ENCODE measurements at regions of chr18 and their contacts with region 1.

Region 1: GRCh38 chr18:11553098-11553940 is 56.1 kb upstream of the SLC35G4 start:
- DNase-seq: no peak
- ATAC-seq: peak in 5 of 8 donors; percentile 23 to 75 (median 58)
- H3K4me3 ChIP-seq: no peak overlapping the region
- H3K27ac ChIP-seq: no peak overlapping the region
- H3K4me1 ChIP-seq: no peaks in the 10 kb centered on the region
- H3K27me3 ChIP-seq: peaks cover 0 to 17% (median 0%) of the 10 kb centered on the region in 7 donors
- CTCF ChIP-seq: peak; percentile 71 to 95 (median 89)

Region 2: DNA sequence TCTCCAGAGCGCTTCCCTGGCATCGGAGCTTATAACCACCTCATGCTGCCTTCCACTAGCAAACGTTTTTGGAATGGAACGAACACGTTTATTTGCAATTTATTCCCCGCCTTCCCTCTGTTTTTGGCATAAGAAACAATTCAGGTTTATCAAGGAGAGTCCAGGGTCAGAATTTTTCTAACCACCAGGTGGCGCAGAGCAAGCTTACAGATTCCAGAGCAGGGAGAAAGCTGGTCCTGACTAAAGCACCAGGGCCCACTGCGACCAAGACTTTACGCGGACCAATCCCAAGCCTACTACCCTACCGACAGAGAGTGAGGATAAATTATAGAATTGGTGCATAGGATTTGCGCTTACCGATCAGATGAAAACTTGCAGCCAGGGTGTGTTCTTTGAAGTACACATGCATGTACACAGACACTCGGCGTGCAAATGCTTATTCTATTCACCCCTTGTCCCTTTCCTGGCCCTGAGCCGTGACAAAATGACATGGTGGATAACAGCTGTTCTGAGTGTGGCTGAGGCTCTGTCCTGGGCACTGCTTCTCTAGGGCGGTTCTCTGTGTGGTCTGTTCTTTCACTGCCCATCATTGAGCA is 992.8 kb before region 1 on chr18:
- intact Hi-C with region 1: loop called in 4 of 10 experiments (anchors 5 to 10 kb)
- DNase-seq: peak; percentile 39 to 76
- ATAC-seq: peak; percentile 68 to 85 (median 79)
- H3K4me3 ChIP-seq: peak overlapping the region in 7 of 10 donors; percentile 13 to 45 (median 37)
- H3K27ac ChIP-seq: peak overlapping the region in 3 of 10 donors; percentile 31 to 57 (median 46)
- H3K4me1 ChIP-seq: peaks cover 0 to 18% (median 12%) of the 10 kb centered on the region in 9 donors
- H3K27me3 ChIP-seq: no peaks in the 10 kb centered on the region
- CTCF ChIP-seq: peak; percentile 64 to 82 (median 77)

Region 3: DNA sequence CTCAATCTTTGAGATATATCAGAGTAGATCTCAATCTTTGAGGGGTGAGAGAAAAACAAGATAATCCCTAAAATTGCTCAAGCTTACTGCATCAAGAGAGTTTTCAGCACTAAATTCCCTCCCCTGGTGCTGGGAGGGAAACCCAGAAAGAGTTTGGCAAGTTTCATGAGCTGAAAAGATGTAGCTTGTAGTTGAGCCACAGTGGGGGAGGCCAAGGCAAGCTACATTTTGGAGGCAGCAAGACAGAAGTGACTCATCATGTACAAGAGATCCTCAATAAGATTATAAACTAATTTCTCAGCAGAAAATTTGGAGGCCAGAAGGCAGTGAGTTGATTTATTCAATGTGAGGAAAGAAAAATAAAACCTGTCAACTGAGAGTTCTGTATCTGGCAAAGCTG is 712.1 kb before region 1 on chr18:
- intact Hi-C with region 1: loop called in 2 of 10 experiments (anchors 5 to 10 kb)
- DNase-seq: no peak
- ATAC-seq: peak in 1 of 8 donors; percentile 46
- H3K4me3 ChIP-seq: no peak overlapping the region
- H3K27ac ChIP-seq: no peak overlapping the region
- H3K4me1 ChIP-seq: peaks cover 0 to 7% (median 0%) of the 10 kb centered on the region in 9 donors
- H3K27me3 ChIP-seq: peaks cover 0 to 3% (median 0%) of the 10 kb centered on the region in 7 donors
- CTCF ChIP-seq: no peak

Region 4: GRCh38 chr18:10846657-10847407 is 706.5 kb before region 1 on chr18:
- intact Hi-C with region 1: loop called in 8 of 10 experiments (anchors 5 to 10 kb)
- DNase-seq: no peak
- ATAC-seq: no peak
- H3K4me3 ChIP-seq: no peak overlapping the region
- H3K27ac ChIP-seq: no peak overlapping the region
- H3K4me1 ChIP-seq: peaks cover 0 to 7% (median 0%) of the 10 kb centered on the region in 9 donors
- H3K27me3 ChIP-seq: peaks cover 0 to 12% (median 0%) of the 10 kb centered on the region in 7 donors
- CTCF ChIP-seq: no peak

Region 5: GRCh38 chr18:10851824-10852319 is 701.4 kb before region 1 on chr18:
- intact Hi-C with region 1: loop called in 8 of 10 experiments (anchors 5 to 10 kb)
- DNase-seq: no peak
- ATAC-seq: no peak
- H3K4me3 ChIP-seq: no peak overlapping the region
- H3K27ac ChIP-seq: no peak overlapping the region
- H3K4me1 ChIP-seq: no peaks in the 10 kb centered on the region
- H3K27me3 ChIP-seq: peaks cover 0 to 19% (median 0%) of the 10 kb centered on the region in 7 donors
- CTCF ChIP-seq: peak; percentile 46 to 85 (median 74)

Region 6: GRCh38 chr18:11034884-11035283 is 518.4 kb before region 1 on chr18:
- intact Hi-C with region 1: loop called in 1 of 10 experiments (anchors 10 kb)
- DNase-seq: no peak
- ATAC-seq: no peak
- H3K4me3 ChIP-seq: no peak overlapping the region
- H3K27ac ChIP-seq: no peak overlapping the region
- H3K4me1 ChIP-seq: no peaks in the 10 kb centered on the region
- H3K27me3 ChIP-seq: peaks cover 0 to 20% (median 0%) of the 10 kb centered on the region in 7 donors
- CTCF ChIP-seq: no peak

Region 7: GRCh38 chr18:11310476-11311086 is 242.7 kb before region 1 on chr18:
- intact Hi-C with region 1: loop called in 4 of 10 experiments (anchors 10 kb)
- DNase-seq: peak; percentile 26 to 31
- ATAC-seq: peak in 5 of 8 donors; percentile 47 to 70 (median 61)
- H3K4me3 ChIP-seq: no peak overlapping the region
- H3K27ac ChIP-seq: no peak overlapping the region
- H3K4me1 ChIP-seq: peaks cover 0 to 8% (median 0%) of the 10 kb centered on the region in 9 donors
- H3K27me3 ChIP-seq: no peaks in the 10 kb centered on the region
- CTCF ChIP-seq: peak in 8 of 9 donors; percentile 31 to 72 (median 66)